HepG2 (cell line): ENCODE measurements at regions of chr13 and their contacts with region 1.

Region 1: DNA sequence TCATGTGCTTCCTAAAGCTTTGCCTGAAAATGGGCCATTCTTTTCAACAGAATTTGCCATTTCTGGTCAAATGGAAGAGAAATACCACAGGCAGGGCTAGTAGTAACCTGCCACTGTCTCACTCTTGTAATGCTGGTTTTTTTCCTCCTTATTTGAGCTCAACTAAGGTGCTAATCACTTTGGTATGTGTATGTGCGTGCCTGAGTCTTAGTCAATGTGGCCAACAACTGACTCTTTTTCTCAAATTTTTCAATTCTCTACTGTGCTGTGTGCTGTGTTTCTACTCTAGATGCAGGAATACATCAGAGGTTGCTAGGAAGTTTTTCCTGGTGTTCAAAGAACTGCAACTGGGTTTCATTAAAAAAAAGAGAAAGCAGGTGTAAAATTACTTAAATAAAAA is 870.2 kb downstream of the EFNB2 start:
- DNase-seq: no peak
- ATAC-seq: no peak
- H3K4me3 ChIP-seq: no peak overlapping the region
- H3K27ac ChIP-seq: no peak overlapping the region
- H3K4me1 ChIP-seq: no peaks in the 10 kb centered on the region
- H3K27me3 ChIP-seq: no peaks in the 10 kb centered on the region
- CTCF ChIP-seq: no peak
- EP300 ChIP-seq: no peak
- POLR2A ChIP-seq: no peak
- RAD21 ChIP-seq: no peak

Region 2: DNA sequence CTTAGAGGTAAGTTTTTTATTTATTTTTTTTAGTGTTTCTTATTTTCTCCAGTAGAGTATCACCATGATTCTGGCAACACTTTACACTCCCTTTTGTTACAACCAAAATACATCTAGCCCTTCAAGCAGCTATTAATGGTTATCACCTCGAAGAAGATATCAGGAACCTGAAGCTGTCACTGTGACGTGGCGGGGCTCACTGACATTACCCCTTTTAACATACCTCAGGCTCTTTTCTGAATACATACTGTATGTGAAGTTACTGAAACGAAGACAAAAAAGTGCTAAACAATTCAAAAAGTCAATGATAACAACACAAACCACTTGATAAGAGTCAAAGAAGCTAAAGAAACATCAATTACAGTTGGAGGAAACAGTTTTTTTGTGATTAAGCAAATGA is 348.6 kb before region 1 on chr13:
- CTCF ChIA-PET with region 1: no interaction called
- POLR2A ChIA-PET with region 1: no interaction called
- in situ Hi-C with region 1: no loop called
- intact Hi-C with region 1: no loop called
- DNase-seq: no peak
- ATAC-seq: no peak
- H3K4me3 ChIP-seq: no peak overlapping the region
- H3K27ac ChIP-seq: no peak overlapping the region
- H3K4me1 ChIP-seq: no peaks in the 10 kb centered on the region
- H3K27me3 ChIP-seq: no peaks in the 10 kb centered on the region; a peak in 1 of 5 replicates
- CTCF ChIP-seq: no peak
- EP300 ChIP-seq: no peak
- POLR2A ChIP-seq: no peak
- RAD21 ChIP-seq: no peak

Region 3: DNA sequence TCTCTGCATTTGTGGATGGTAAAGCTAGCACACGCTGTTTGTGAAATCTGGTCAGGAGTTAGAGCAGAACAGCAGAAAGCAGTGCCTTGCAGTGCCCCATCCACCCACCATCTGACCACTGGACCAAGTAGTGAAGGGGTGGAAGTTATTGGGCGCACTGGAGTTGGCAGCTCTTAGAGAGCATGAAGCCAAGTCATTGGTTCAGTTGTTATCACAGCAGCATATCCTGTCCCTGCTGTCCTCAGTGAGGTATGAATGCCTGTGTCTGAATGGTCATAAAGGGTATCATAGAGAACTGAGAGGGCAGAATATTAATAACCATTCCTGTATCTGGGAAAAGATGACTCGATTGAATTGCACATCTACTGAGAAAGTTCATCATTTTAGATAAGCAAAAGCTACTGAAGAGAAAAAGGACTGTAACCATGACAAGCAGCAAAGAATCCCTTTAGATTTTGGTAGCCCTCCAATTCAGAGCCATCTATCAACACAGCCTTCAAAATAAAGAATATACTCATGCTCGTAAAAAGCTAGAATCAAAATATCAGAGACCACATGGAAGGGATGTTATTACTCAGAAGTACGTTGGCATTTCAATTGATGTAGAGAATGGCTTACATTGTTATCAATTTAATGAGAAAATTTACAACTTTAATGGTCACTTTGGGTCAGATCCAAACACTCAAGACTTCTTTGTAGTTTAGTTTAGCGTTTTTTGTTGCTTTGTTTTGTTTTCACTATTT is 48.8 kb before region 1 on chr13:
- CTCF ChIA-PET with region 1: no interaction called
- POLR2A ChIA-PET with region 1: no interaction called
- in situ Hi-C with region 1: no loop called
- intact Hi-C with region 1: no loop called
- DNase-seq: no peak
- ATAC-seq: no peak
- H3K4me3 ChIP-seq: no peak overlapping the region
- H3K27ac ChIP-seq: no peak overlapping the region
- H3K4me1 ChIP-seq: no peaks in the 10 kb centered on the region
- H3K27me3 ChIP-seq: no peaks in the 10 kb centered on the region
- CTCF ChIP-seq: no peak
- EP300 ChIP-seq: no peak
- POLR2A ChIP-seq: no peak
- RAD21 ChIP-seq: no peak

Region 4: GRCh38 chr13:105679838-105680237 is 14.6 kb after region 1 on chr13:
- CTCF ChIA-PET with region 1: no interaction called
- POLR2A ChIA-PET with region 1: no interaction called
- in situ Hi-C with region 1: no loop called
- intact Hi-C with region 1: loop called (anchors 1 kb)
- DNase-seq: no peak
- ATAC-seq: no peak
- H3K4me3 ChIP-seq: no peak overlapping the region
- H3K27ac ChIP-seq: no peak overlapping the region
- H3K4me1 ChIP-seq: no peaks in the 10 kb centered on the region
- H3K27me3 ChIP-seq: no peaks in the 10 kb centered on the region
- CTCF ChIP-seq: no peak
- EP300 ChIP-seq: no peak
- POLR2A ChIP-seq: no peak
- RAD21 ChIP-seq: no peak